Sigmoid colon (tissue), 7 donors: ENCODE measurements at regions of chr17 and their contacts with region 1.

Region 1: GRCh38 chr17:59004338-59005111 is 102.2 kb downstream of the TRIM37 start:
- DNase-seq: no peak
- H3K4me3 ChIP-seq: no peak overlapping the region
- H3K27ac ChIP-seq: no peak overlapping the region
- H3K4me1 ChIP-seq: peaks cover 0 to 3% (median 0%) of the 10 kb centered on the region in 4 donors
- H3K27me3 ChIP-seq: no peaks in the 10 kb centered on the region
- CTCF ChIP-seq: peak; percentile 73 to 95 (median 85)
- EP300 ChIP-seq: no peak
- POLR2A ChIP-seq: no peak

Region 2: GRCh38 chr17:58587702-58588254 is 416.7 kb before region 1 on chr17:
- intact Hi-C with region 1: loop called (anchors 1 kb)
- DNase-seq: peak; percentile 67
- H3K4me3 ChIP-seq: no peak overlapping the region
- H3K27ac ChIP-seq: no peak overlapping the region
- H3K4me1 ChIP-seq: peaks cover 0 to 3% (median 0%) of the 10 kb centered on the region in 4 donors
- H3K27me3 ChIP-seq: no peaks in the 10 kb centered on the region
- CTCF ChIP-seq: peak; percentile 40 to 91 (median 79)
- EP300 ChIP-seq: no peak
- POLR2A ChIP-seq: no peak

Region 3: GRCh38 chr17:58710936-58711775 is 293.4 kb before region 1 on chr17:
- intact Hi-C with region 1: loop called (anchors 5 kb)
- DNase-seq: no peak
- H3K4me3 ChIP-seq: no peak overlapping the region
- H3K27ac ChIP-seq: no peak overlapping the region
- H3K4me1 ChIP-seq: no peaks in the 10 kb centered on the region
- H3K27me3 ChIP-seq: no peaks in the 10 kb centered on the region
- CTCF ChIP-seq: peak in 2 of 4 experiments; percentile 51 to 64
- EP300 ChIP-seq: no peak
- POLR2A ChIP-seq: no peak

Region 4: GRCh38 chr17:58932964-58933363 is 71.6 kb before region 1 on chr17:
- intact Hi-C with region 1: no loop called
- DNase-seq: no peak
- H3K4me3 ChIP-seq: no peak overlapping the region
- H3K27ac ChIP-seq: no peak overlapping the region
- H3K4me1 ChIP-seq: no peaks in the 10 kb centered on the region
- H3K27me3 ChIP-seq: no peaks in the 10 kb centered on the region
- CTCF ChIP-seq: no peak
- EP300 ChIP-seq: no peak
- POLR2A ChIP-seq: no peak